AG04450 (cell line): ENCODE measurements at regions of chr17 and their contacts with region 1.

Region 1: DNA sequence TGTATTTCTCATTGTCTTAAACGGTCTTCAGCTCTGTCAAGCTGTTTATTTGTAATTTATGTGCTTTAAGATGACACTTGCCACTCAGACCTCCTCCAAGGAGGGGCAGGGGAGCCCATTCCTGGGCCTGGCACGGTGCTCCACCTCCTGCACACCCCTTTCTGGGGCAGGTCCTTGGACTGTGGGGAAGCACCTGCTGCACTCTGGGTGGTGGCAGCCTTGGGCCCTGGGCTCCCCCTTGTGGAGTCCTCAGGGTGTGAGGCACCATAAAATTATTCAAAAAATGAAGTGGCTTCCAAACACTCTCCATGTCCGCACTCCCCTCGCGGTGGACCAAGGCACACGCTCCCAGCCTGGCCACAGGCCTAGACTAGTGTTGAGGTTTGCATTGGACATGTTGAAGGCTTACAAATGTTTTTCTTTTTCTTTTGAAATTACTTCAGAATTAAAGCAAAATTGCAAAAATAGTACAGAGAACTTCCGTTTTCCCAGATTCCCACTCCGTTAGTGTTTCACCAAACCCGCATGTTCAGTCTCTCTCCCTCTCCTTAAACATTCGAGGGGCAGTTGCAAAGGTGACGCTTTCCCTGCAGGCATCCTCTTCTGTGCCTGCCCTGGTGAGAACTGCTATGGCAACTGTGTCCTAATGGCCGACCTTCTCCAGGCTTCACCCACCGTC is 32.4 kb downstream of the FOXK2 start:
- DNase-seq: peak; percentile 37
- H3K4me3 ChIP-seq: no peak overlapping the region
- H3K27ac ChIP-seq: no peak overlapping the region
- H3K27me3 ChIP-seq: no peaks in the 10 kb centered on the region
- CTCF ChIP-seq: peak; percentile 76

Region 2: DNA sequence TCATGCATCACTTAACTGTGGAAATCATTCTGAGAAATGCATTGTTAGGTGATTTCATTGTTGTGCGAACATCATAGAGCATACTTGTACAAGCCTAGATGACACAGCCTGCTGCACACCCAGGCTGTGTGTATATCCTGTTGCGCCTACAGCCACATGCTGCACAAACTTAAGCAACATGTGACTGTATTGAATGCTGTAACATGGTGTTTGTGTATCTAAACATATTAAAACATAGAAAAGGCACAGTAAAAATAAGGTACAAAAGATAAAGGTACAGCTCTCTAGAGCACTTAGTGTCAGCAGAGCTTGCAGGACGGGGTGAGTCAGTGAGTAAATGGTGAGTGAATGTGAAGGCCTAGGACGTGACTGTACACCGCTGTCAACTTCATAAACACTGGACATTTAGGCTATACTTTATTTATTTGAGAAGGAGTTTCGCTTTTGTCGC is 20.5 kb before region 1 on chr17:
- CTCF ChIA-PET with region 1: interaction called, 38 read pairs
- POLR2A ChIA-PET with region 1: no interaction called
- DNase-seq: peak; percentile 48
- H3K4me3 ChIP-seq: peak overlapping the region; percentile 10; the same call in 1 of the 2 replicates
- H3K27ac ChIP-seq: peak overlapping the region; percentile 75
- H3K27me3 ChIP-seq: no peaks in the 10 kb centered on the region
- CTCF ChIP-seq: no peak

Region 3: DNA sequence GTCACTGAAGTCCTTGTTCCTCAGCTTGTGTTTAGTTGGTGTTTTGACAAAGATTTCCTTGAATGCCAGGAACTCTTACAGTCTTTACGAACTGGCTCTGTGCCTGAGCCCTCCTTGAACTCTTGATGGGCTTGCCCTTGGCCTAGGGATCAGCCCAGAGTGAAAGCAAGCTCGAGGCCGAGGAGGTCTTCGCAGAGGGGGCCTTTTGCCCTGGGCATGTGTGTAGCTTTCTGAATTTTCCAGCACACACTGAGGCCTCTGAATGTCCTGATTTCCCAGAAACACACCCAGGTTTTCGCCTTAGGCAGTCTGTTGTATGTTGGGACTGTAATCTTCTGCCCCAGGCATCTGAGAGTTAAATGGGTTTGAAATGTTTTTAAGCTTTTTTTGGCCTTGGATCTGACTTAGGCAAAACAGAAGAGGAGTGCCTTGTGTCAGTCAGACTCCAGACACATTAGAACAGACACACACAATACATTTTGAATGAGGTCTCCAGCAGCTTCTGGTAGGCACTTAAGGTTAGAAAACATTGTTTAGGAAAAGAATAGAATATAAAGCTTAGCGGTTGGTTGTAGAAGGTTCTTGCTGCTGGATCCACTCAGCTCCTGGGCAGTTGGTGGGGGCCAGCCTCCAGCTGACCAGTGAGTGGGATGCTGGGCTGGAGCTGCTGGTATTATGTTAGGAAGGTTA is 15.3 kb before region 1 on chr17:
- CTCF ChIA-PET with region 1: interaction called, 38 read pairs
- POLR2A ChIA-PET with region 1: no interaction called
- DNase-seq: no peak
- H3K4me3 ChIP-seq: peak overlapping the region; percentile 23; the same call in 1 of the 2 replicates
- H3K27ac ChIP-seq: peak overlapping the region; percentile 100
- H3K27me3 ChIP-seq: no peaks in the 10 kb centered on the region
- CTCF ChIP-seq: no peak

Region 4: GRCh38 chr17:82568997-82569393 is 17.1 kb after region 1 on chr17:
- CTCF ChIA-PET with region 1: interaction called, 12 read pairs
- POLR2A ChIA-PET with region 1: no interaction called
- DNase-seq: no peak
- H3K4me3 ChIP-seq: no peak overlapping the region
- H3K27ac ChIP-seq: no peak overlapping the region
- H3K27me3 ChIP-seq: no peaks in the 10 kb centered on the region
- CTCF ChIP-seq: no peak

Region 5: DNA sequence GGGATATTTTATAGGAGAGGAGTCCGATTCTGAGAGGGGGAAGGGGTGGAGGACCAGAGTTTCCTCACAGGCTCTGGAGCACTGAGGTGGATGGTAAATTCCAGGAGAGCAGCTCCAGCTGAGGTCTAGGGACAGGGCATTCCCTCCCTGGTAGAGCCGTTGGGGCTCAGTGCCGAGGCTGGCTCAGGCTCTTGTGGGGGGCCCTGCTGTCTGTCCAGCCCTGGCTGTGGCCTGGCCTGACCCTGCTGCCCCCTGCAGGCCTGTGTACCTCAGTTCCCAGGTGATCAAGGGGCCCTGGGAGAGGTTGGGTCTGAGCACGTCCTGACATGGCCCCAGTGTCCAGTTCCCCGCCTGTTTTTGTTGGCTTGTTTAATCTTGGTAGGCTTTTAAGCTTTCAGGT is 271.1 kb after region 1 on chr17:
- CTCF ChIA-PET with region 1: interaction called, 11 read pairs
- POLR2A ChIA-PET with region 1: no interaction called
- DNase-seq: no peak
- H3K4me3 ChIP-seq: no peak overlapping the region
- H3K27ac ChIP-seq: no peak overlapping the region
- H3K27me3 ChIP-seq: no peaks in the 10 kb centered on the region
- CTCF ChIP-seq: no peak